ENCODE measurements at regions of chr17 and their contacts with region 1.

Region 1: GRCh38 chr17:15502369-15503112 is 35.1 kb upstream of the CDRT4 start:
- DNase-seq: peak; percentile 71 to 76
- ATAC-seq: peak; percentile 89 to 97
- H3K4me3 ChIP-seq: no peak overlapping the region
- H3K27ac ChIP-seq: peak overlapping the region; percentile 9 to 56; a peak in 2 of 6 replicates
- H3K4me1 ChIP-seq: peaks cover 5% of the 10 kb centered on the region; the same call in 1 of the 3 replicates
- CTCF ChIP-seq: peak; percentile 93
- EP300 ChIP-seq: no peak
- POLR2A ChIP-seq: no peak
- RAD21 ChIP-seq: peak; percentile 95 to 97

Region 2: DNA sequence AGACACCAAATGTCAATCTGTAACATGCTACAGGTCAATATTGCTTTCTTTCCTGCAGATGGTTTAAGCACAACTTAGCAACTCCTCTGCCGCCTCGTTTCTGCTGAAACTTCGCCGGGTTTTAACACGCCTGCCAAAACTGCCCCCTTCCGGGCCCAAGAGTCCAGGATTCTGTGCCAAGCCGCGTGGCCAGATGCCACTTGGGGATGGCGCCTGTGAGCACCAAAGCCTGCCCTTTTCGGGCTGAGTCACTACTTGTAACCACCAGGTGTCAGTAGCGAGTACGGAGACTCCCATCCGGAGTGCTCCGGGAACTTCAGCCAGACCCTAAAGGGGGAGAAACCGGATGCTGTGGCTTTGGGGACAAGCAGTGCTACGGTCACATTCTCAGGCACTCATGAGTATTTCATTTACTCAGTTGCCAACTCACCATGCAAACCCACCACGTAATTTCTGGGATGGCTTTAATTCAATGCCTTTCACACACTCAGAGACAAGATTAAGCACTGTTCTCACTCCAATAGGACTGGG is 245.2 kb before region 1 on chr17:
- CTCF ChIA-PET with region 1: interaction called, 248 read pairs
- POLR2A ChIA-PET with region 1: interaction called, 5 read pairs
- DNase-seq: peak; percentile 74 to 82
- ATAC-seq: peak; percentile 8 to 37; a peak in 4 of 6 replicates
- H3K4me3 ChIP-seq: no peak overlapping the region
- H3K27ac ChIP-seq: peak overlapping the region in 1 of 2 experiments; percentile 12; a peak in 1 of 6 replicates
- H3K4me1 ChIP-seq: peaks cover 12% of the 10 kb centered on the region; the same call in 2 of the 3 replicates
- CTCF ChIP-seq: peak; percentile 97
- EP300 ChIP-seq: no peak
- POLR2A ChIP-seq: no peak
- RAD21 ChIP-seq: peak; percentile 78 to 81

Region 3: DNA sequence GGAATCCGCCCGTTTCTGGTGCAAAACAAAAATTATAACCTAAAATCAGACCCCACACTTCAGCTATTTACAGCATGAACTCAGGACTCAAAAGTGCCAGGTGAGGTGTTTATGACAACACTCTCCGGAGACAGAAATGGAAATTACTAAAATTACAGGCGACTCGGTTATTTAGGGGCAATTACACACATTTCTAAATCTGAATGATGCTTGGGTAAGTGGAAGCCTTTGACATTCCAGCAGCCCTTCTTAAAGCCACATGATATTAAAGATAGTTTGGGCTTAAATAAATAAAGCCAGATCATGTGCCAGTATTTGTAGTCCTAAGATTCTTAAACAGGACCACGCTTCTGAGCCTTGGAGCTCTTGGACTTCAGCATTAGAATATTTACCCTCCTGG is 200.7 kb before region 1 on chr17:
- CTCF ChIA-PET with region 1: interaction called, 13 read pairs
- POLR2A ChIA-PET with region 1: no interaction called
- DNase-seq: no peak
- ATAC-seq: no peak
- H3K4me3 ChIP-seq: no peak overlapping the region
- H3K27ac ChIP-seq: no peak overlapping the region
- H3K4me1 ChIP-seq: peaks cover 12% of the 10 kb centered on the region
- CTCF ChIP-seq: no peak
- EP300 ChIP-seq: no peak
- POLR2A ChIP-seq: no peak
- RAD21 ChIP-seq: no peak

Region 4: DNA sequence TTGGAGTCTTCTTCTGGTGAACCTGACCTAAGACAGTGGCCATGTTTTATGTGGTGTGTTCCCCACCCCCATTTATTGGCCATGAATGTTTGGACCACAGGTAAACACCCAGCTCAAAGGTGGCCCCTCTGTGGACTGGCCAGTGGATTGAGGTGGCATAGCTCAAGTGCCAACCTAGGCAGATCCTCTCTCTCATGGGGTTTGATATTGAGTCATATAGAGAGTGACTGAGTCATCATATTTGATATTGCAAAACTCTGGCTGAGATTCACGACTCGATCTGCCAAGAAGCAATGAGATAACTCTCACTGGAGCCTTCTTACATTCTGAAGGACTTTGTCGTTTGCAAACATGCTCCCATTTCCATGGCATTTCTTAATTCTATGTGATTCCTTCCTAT is 150.6 kb before region 1 on chr17:
- CTCF ChIA-PET with region 1: interaction called, 16 read pairs
- POLR2A ChIA-PET with region 1: no interaction called
- DNase-seq: peak; percentile 76 to 86
- ATAC-seq: peak; percentile 94 to 96
- H3K4me3 ChIP-seq: no peak overlapping the region
- H3K27ac ChIP-seq: peak overlapping the region; percentile 24 to 72; a peak in 5 of 6 replicates
- H3K4me1 ChIP-seq: peaks cover 31% of the 10 kb centered on the region
- CTCF ChIP-seq: no peak
- EP300 ChIP-seq: no peak
- POLR2A ChIP-seq: no peak
- RAD21 ChIP-seq: no peak

Region 5: DNA sequence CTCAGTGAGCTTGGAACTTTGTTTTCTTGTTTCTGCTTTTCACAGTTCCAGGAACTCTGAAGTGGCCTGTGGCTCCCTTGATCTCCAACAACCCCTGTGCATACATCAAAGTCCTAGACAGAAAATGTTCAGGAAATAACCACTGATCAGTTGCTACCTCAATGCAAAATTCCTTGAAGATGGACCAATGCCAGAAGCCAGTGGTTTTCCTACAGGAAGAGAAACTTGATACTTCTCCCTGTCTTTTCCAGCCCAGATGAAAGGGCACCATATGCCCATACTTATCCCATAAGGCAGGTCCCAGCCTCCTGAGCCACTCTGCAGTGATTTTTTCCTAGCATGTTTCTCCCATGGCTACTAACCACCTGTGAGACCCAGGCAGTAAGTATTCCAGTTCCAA is 22.8 kb before region 1 on chr17:
- CTCF ChIA-PET with region 1: interaction called, 25 read pairs
- POLR2A ChIA-PET with region 1: no interaction called
- DNase-seq: no peak
- ATAC-seq: 0 out of 6 replicates have a peak, but pooled peaks of 1 of the 2 experiments have one; percentile 26
- H3K4me3 ChIP-seq: no peak overlapping the region
- H3K27ac ChIP-seq: no peak overlapping the region
- H3K4me1 ChIP-seq: no peaks in the 10 kb centered on the region
- CTCF ChIP-seq: no peak
- EP300 ChIP-seq: no peak
- POLR2A ChIP-seq: no peak
- RAD21 ChIP-seq: no peak

Measured in A549 (cell line).